HEK293 (cell line): ENCODE measurements at regions of chr12 and their contacts with region 1.

Region 1: DNA sequence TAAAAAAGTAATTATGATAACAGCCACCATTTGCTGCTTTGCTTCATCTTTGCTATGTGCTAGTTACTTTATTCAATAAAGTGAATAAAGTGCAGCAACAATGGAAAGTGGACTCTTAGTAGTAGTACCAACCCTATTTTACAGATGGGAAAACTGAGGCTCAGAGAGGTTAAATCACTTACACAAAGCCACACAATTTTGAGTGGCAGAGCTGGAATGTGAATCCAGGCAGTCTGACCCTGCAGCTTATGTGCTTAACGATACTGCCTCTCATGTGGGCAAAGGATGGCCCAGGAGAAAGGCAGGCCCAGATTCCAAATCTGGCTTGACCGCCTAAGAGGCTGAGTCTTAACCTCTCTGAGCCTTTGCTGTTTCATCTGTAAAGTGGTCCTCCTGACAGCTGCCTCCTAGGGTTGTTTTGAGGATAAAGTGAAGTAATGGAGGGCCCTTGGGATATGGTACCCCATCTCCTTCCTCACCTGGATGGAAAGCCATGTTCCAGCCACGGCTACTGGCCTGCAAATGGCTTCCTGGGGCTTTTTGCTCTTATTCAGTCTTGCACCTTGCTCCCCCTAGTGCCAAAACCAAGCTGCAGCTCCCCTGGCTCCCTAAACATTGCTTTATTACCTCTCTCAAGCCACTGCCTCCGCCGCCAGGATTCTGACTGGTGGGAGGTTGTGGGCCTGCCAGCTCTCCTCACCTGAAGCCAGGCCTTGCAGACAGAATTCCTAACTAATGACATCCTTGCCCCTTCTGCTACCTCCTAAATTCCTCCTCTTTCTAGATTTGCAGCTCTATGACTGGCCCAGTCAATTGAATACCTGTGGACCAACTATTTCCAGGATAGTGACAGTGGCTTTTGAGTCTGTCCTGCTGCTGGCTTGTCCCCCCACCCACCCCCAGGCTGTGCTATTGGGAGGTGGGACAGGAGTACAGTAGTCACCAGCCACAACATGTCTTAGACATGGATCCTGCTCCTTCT is 283.3 kb upstream of the PWP1 start:
- H3K4me3 ChIP-seq: no peak overlapping the region
- H3K27ac ChIP-seq: no peak overlapping the region
- H3K4me1 ChIP-seq: no peaks in the 10 kb centered on the region
- CTCF ChIP-seq: peak; percentile 61

Region 2: GRCh38 chr12:107320033-107320928 is 82.1 kb before region 1 on chr12:
- CTCF ChIA-PET with region 1: interaction called, 10 read pairs
- POLR2A ChIA-PET with region 1: no interaction called
- H3K4me3 ChIP-seq: peak overlapping the region; percentile 66
- H3K27ac ChIP-seq: peak overlapping the region; percentile 51; the same call in 1 of the 2 replicates
- H3K4me1 ChIP-seq: no peaks in the 10 kb centered on the region
- CTCF ChIP-seq: peak; percentile 8; the same call in 1 of the 2 replicates

Region 3: DNA sequence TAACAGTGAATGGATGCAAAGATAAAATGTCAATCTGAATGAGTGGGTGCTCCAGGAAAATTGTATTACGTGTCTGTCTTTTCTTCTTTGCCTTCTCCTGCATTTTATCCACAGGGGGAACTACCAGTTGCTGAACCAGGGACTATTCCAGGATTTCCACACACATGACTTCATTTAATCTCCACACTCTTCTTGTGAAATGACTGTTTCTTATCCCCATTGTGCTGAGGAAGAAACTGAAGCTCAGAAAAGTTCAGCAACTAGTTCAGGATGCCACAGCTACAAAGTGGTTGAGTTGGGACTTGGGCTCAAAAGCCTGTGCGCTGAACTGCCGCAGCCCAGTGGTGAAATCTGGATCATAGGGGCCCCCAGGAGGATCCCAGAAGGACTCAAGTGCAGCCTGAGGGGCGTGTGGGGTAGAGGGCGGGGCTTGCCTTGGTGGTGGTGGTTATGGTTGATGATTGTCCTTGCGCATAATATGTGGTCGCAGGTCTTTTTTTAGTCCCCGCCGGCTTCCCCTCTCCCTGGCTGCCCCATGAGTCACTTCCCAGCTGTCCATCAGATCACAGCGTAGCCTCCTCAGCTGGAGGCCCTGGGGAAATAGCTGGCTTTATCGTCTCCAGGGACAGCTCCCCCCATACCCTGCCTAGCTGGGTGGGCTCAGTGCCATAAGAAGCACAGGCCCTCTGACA is 73.7 kb before region 1 on chr12:
- CTCF ChIA-PET with region 1: interaction called, 10 read pairs
- POLR2A ChIA-PET with region 1: interaction called, 3 read pairs
- H3K4me3 ChIP-seq: no peak overlapping the region
- H3K27ac ChIP-seq: no peak overlapping the region
- H3K4me1 ChIP-seq: peaks cover 14% of the 10 kb centered on the region
- CTCF ChIP-seq: no peak

Region 4: GRCh38 chr12:107361970-107362369 is 40.4 kb before region 1 on chr12:
- CTCF ChIA-PET with region 1: interaction called, 11 read pairs
- POLR2A ChIA-PET with region 1: no interaction called
- H3K4me3 ChIP-seq: no peak overlapping the region
- H3K27ac ChIP-seq: no peak overlapping the region
- H3K4me1 ChIP-seq: peaks cover 4% of the 10 kb centered on the region; the same call in 1 of the 2 replicates
- CTCF ChIP-seq: no peak

Region 5: GRCh38 chr12:107607464-107608392 is 205.4 kb after region 1 on chr12:
- CTCF ChIA-PET with region 1: interaction called, 75 read pairs
- POLR2A ChIA-PET with region 1: no interaction called
- H3K4me3 ChIP-seq: no peak overlapping the region
- H3K27ac ChIP-seq: no peak overlapping the region
- H3K4me1 ChIP-seq: no peaks in the 10 kb centered on the region
- CTCF ChIP-seq: peak; percentile 78